Posterior vena cava (tissue), 2 donors: ENCODE measurements at regions of chr11 and their contacts with region 1.

Region 1: GRCh38 chr11:107665018-107665417 is 46.8 kb downstream of the SLN start:
- DNase-seq: no peak

Region 2: GRCh38 chr11:107648242-107648641 is 16.8 kb before region 1 on chr11:
- intact Hi-C with region 1: loop called in 1 of 2 experiments (anchors 2 kb)
- DNase-seq: no peak

Region 3: DNA sequence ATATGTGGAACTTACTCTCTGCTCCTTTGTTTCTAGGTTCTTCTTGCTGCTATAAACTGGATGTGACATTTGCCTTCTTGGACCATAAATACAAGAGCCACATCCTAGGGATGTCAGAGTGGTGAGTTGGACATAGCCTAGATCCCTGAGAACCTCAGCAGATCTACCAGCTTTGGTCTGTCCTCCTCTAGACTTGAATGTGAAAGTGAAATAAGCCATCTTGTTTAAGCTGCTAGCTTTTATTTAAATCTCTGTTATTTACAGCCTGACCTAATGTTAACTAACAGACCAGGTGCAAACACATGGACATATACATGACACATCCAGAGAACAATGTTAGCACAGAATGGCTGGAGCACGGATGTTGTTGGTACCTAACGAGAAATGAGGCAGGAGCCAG is 10.9 kb after region 1 on chr11:
- intact Hi-C with region 1: loop called in 1 of 2 experiments (anchors 1 kb)
- DNase-seq: no peak